Calu3 (cell line): ENCODE measurements at regions of chr12 and their contacts with region 1.

Region 1: DNA sequence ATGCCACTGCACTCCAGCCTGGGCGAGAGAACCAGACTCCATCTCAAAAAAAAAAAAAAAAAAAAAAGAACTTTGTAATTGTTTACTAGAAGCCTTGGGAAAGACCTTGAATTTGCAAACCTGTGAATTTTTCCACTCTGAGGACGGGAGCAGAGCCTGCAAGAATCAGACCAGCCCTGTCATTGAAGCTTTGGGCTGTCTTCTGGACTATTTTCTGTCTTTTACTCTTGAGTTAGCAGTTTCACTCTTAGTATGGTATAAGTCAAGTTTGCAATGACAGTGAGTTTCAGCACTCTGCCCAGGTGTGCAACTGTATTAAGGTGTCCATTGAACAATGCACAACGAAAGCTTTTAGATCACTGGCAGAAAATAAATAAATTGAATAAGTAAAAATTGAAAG is 81.4 kb upstream of the KRAS start:
- DNase-seq: no peak
- H3K4me3 Mint-ChIP-seq: no peak overlapping the region
- H3K27ac Mint-ChIP-seq: no peak overlapping the region
- H3K4me1 Mint-ChIP-seq: no peaks in the 10 kb centered on the region
- H3K27me3 Mint-ChIP-seq: no peaks in the 10 kb centered on the region
- CTCF ChIP-seq: no peak

Region 2: GRCh38 chr12:24742378-24742777 is 589.8 kb before region 1 on chr12:
- CTCF ChIA-PET with region 1: no interaction called
- intact Hi-C with region 1: no loop called
- DNase-seq: no peak
- H3K4me3 Mint-ChIP-seq: no peak overlapping the region
- H3K27ac Mint-ChIP-seq: no peak overlapping the region
- H3K4me1 Mint-ChIP-seq: no peaks in the 10 kb centered on the region
- H3K27me3 Mint-ChIP-seq: no peaks in the 10 kb centered on the region
- CTCF ChIP-seq: no peak

Region 3: DNA sequence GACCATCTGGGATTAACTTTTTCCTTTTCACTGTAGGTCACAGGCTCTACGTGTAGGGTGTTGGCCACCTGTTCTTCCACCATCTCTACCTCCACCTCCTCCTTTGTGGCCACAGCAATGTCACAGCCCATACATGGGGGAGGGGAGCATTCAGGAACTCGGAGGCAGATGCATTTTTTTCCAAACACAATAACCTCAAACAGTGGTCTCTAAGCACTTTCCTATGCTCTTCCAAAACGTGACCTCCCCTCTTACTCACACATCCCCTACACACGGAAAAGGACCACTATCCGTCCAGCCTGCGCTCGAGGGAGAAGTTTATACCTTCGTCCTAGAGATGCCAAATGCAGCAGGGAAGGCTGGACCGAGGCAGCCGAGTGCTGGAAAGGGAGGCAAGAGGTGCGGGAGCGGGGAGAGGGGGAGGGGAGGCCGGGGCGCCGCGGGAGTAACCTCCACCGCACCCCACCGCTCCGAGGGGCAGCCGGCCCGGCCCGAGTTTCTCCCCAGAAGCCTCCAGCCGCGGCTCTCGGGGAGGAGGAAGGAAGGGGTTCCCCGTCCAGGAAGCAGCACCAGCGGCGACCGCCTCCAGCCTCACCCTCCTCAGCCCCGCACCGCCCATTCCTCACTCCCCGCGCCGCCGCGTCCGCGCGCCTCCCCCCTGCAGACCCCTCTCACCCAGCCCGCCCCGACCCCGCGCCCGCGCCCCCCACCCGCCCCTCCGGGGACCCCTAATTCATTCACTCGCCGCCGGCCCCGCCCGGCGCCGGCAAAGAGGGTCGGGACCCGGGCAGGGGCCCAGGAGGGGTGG is 82.0 kb before region 1 on chr12:
- CTCF ChIA-PET with region 1: interaction called, 4 read pairs
- intact Hi-C with region 1: loop called (anchors 10 kb)
- DNase-seq: peak; percentile 34
- H3K4me3 Mint-ChIP-seq: peak overlapping the region; percentile 81
- H3K27ac Mint-ChIP-seq: peak overlapping the region; percentile 64
- H3K4me1 Mint-ChIP-seq: peaks cover 7% of the 10 kb centered on the region
- H3K27me3 Mint-ChIP-seq: no peaks in the 10 kb centered on the region
- CTCF ChIP-seq: no peak